Activated CD8-positive, alpha-beta memory T cell treated with anti-CD3 and anti-CD28 coated beads, Interleukin-2, amount 10 ng/mL, durations not matched to agents 7 days and 5 days (primary cell): ENCODE measurements at regions of chr2 and their contacts with region 1.

Region 1: GRCh38 chr2:37832590-37833197 is 92.4 kb upstream of the RMDN2 start:
- DNase-seq: peak; percentile 87
- ATAC-seq: peak; percentile 93
- H3K4me3 Mint-ChIP-seq: no peak overlapping the region
- H3K27ac Mint-ChIP-seq: no peak overlapping the region
- H3K4me1 Mint-ChIP-seq: peaks cover 16% of the 10 kb centered on the region
- H3K27me3 Mint-ChIP-seq: no peaks in the 10 kb centered on the region

Region 2: DNA sequence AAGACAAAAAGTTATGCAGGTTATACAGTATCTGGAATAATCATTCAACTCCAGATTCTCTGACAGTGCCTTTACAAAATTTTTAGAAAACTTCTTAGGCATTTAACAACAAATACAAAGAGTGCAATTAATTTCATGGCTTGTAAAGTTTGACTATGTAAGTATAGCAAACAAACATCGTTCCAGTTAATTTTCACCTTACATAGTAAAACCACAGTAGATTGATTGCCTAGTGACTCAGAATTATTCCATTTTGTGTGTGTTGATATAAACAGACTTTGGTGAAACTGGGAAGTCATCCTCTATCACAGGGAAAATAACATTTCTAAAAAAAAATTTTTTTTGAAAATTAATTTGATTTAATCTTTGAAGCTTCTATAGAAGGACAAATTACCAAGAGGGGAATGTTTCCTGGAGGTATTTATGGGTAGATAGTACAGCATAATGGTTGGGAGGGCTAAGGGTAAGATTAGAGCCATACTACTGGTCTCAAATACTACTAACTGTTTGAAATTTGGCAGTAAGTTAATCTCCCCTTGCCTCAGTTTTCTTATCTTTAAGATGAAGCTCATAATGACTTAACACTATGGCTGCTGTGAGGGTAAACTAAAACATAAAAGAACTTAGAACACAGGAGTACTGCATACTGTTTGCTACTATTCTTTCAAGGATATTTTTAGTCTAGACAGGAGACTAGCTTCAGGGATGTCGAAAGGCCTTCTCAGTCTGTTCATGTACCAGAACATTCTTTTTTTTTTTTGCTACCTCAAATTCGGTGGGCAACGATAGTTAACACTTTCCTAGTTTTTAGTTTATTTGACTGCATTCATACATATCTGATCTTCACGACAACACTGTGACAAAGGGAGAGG is 581.6 kb before region 1 on chr2:
- CTCF ChIA-PET with region 1: no interaction called
- DNase-seq: no peak
- ATAC-seq: no peak
- H3K4me3 Mint-ChIP-seq: no peak overlapping the region
- H3K27ac Mint-ChIP-seq: no peak overlapping the region
- H3K4me1 Mint-ChIP-seq: no peaks in the 10 kb centered on the region
- H3K27me3 Mint-ChIP-seq: no peaks in the 10 kb centered on the region

Region 3: DNA sequence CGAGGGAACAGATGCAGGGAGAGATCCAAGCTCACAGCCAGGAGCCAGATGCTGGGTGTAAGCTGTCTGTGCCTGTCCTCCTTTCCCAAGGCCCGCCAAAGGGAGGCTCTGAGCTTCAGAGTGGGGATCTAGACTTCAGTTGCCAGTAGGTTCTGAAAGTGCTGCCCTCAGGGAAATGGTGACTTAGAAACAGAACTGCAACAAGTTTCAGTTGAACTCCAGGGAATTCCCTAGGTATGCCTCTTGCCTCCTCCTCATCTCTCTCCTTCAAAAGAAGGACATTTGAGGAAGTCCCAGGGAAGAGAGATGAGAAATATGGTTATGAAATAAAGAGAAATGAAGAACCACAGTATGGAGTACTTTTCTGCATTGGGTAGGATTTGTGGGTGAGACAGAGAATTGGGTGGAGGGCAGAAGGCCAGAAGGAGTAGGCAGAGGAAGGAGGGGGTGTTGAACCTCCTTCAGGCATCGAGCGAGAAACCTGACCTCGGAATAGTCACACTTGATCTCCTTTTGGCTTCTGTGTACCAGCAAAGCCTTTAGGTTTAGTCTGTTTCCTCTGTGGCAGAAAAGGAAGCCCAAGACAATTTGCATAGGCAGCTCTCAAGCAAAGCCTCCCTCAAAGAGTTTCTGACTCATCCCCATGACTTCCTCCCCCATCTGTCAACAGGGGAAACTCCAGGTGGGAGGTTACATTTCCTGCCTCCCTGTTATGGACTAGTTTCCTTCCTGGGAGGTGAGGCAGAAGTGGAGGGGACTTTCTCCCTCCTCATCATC is 442.5 kb before region 1 on chr2:
- CTCF ChIA-PET with region 1: interaction called, 57 read pairs
- DNase-seq: peak; percentile 76
- ATAC-seq: peak; percentile 97
- H3K4me3 Mint-ChIP-seq: no peak overlapping the region
- H3K27ac Mint-ChIP-seq: peak overlapping the region; percentile 33
- H3K4me1 Mint-ChIP-seq: peaks cover 3% of the 10 kb centered on the region
- H3K27me3 Mint-ChIP-seq: peaks cover 3% of the 10 kb centered on the region

Region 4: DNA sequence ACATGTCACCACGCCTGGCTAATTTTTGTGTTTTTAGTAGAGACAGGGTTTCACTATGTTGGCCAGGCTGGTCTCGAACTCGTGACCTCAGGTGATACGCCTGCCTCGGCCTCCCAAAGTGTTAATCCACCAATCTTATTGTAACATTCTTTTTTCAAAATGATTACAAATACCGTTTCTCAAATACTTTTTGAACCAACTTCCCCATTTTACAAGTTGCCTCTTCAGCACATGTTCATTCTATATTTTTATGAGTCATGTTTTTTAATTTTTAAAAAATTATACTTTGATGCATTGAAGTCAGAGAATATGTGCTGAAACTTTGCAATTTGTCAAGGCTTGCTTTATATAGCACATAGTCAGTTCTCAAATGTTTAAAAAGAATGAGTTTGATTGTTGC is 430.1 kb before region 1 on chr2:
- CTCF ChIA-PET with region 1: interaction called, 57 read pairs
- DNase-seq: no peak
- ATAC-seq: no peak
- H3K4me3 Mint-ChIP-seq: no peak overlapping the region
- H3K27ac Mint-ChIP-seq: no peak overlapping the region
- H3K4me1 Mint-ChIP-seq: no peaks in the 10 kb centered on the region
- H3K27me3 Mint-ChIP-seq: peaks cover 18% of the 10 kb centered on the region

Region 5: DNA sequence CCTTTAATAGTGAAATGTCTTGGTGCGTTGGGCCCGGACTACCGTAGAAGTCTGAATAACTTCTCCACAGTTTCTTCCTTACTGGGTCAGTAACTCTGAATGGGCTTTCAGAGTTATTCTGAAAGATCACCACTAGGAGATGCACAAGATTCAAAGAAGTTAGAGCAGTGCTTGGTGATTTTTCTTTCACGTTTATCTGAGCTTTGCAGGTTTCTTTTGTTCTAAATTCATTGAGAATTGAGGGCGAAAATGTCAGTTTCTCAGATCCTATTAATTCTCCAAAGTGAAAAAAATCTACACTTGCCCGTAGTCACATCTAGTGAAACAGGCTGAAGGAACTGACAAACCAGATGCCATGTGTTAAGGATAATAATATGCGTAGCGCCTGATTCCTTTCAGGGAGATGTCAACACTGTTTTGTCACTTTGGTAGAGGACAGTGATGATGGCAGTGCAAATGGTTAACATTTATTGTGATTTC is 418.2 kb before region 1 on chr2:
- CTCF ChIA-PET with region 1: interaction called, 61 read pairs
- DNase-seq: no peak
- ATAC-seq: peak; percentile 64
- H3K4me3 Mint-ChIP-seq: no peak overlapping the region
- H3K27ac Mint-ChIP-seq: no peak overlapping the region
- H3K4me1 Mint-ChIP-seq: peaks cover 5% of the 10 kb centered on the region
- H3K27me3 Mint-ChIP-seq: peaks cover 7% of the 10 kb centered on the region

Region 6: GRCh38 chr2:37549598-37549997 is 283.1 kb before region 1 on chr2:
- CTCF ChIA-PET with region 1: interaction called, 11 read pairs
- DNase-seq: no peak
- ATAC-seq: no peak
- H3K4me3 Mint-ChIP-seq: no peak overlapping the region
- H3K27ac Mint-ChIP-seq: no peak overlapping the region
- H3K4me1 Mint-ChIP-seq: peaks cover 8% of the 10 kb centered on the region
- H3K27me3 Mint-ChIP-seq: no peaks in the 10 kb centered on the region

Region 7: DNA sequence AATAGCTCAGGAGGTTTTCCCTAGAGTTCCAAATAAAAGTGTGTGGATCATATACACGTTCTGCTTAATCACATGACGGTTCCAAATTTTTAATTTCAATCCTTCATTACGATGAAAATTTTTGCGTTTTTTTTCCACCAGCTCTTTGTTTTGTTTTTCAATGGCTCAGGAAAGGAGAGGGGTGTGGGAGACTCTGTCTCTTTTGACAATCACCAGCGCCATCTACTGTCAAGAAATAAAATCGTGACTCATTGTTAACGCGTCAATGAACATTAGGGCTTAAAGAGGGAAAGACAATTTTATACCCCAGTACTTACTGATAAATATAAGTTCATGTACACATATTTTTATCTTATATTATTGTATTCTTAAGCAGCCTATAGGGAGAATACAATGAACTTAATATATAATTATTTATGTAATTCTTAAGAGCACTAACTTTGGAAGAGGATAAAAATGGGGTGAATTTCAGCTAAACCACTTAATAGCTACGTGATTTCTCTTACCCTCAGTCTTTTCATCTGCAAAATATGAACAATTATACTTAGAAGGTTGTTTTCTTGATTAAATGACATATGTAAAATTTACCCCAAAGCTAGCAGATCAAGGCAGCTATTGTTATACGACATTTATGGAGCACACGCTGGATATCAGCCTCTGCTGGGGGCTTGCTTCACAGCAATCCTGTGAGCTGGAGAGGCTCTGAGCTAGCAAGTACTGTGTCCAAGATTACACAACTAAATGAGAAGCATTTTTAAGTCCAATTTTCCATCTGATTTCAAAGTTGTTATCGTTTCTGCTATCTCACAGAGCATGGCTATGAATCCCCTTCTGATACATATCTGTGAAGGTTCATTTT is 45.0 kb after region 1 on chr2:
- CTCF ChIA-PET with region 1: interaction called, 107 read pairs
- DNase-seq: no peak
- ATAC-seq: peak; percentile 72
- H3K4me3 Mint-ChIP-seq: no peak overlapping the region
- H3K27ac Mint-ChIP-seq: no peak overlapping the region
- H3K4me1 Mint-ChIP-seq: peaks cover 12% of the 10 kb centered on the region
- H3K27me3 Mint-ChIP-seq: peaks cover 14% of the 10 kb centered on the region